K562 (cell line): ENCODE measurements at regions of chr2 and their contacts with region 1.

Region 1: DNA sequence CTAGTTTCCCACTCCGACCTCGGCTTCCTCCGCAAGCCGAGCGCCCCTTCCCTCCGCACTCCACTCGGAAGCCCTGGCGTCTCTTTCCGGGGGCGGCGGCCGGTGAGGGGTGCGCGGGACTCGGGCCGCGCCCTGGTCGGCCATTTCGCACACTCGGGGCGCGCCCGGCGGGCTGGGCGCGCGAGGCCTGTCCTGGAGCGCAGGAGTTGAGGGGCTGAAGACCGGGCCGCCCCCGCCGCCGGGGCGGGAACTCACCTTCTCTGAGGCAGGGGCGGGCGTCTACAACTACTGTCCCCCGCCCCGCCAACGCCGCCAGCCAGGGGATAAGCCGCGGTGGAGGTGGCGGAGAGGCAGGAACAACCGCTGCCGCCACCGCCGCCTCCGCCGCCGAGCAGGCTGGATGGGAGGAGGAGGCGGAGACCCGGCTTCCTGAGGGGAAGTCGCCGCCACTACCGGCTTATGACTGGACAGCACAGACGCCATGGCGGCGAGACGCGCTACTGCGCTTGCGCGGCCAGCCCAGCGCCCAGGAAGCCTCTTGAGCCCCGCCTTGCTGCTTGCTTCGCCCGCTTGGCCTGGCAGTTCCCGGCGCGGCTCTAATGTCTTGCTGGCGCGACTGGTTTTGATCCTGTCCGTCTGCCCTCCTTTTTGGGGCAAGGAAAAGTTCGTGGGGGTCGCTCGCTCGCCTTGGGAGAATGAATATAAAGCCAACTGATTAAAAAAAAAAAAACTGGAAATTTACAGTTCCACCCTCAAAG is at the start of gene KRCC1:
- DNase-seq: peak; percentile 94 to 97 (median 94)
- ATAC-seq: peak; percentile 90
- H3K4me3 ChIP-seq: peak within 1 kb of the TSS; percentile 79
- H3K27ac ChIP-seq: peak within 1 kb of the TSS; percentile 95
- H3K4me1 ChIP-seq: peaks cover 22 to 42% of the 10 kb centered on the region in 2 experiments
- H3K27me3 ChIP-seq: no peaks in the 10 kb centered on the region
- CTCF ChIP-seq: no peak
- EP300 ChIP-seq: peak; percentile 19; the same call in 1 of the 2 replicates
- POLR2A ChIP-seq: peak; percentile 96
- RAD21 ChIP-seq: 0 out of 4 replicates have a peak, but pooled peaks of 1 of the 2 experiments have one; percentile 5
- polyA plus RNA-seq, gene KRCC1: 2.1 TPM

Region 2: GRCh38 chr2:88016086-88016959 is 39.2 kb before region 1 on chr2 and contains the start of gene RNU2-63P:
- CTCF ChIA-PET with region 1: no interaction called
- POLR2A ChIA-PET with region 1: interaction called, 10 read pairs
- in situ Hi-C with region 1: no loop called
- intact Hi-C with region 1: loop called (anchors 1 kb)
- DNase-seq: peak; percentile 82 to 91 (median 86)
- ATAC-seq: peak; percentile 90
- H3K4me3 ChIP-seq: peak within 1 kb of the TSS; percentile 55
- H3K27ac ChIP-seq: peak within 1 kb of the TSS; percentile 100
- H3K4me1 ChIP-seq: peaks cover 11 to 14% of the 10 kb centered on the region in 2 experiments; a peak in 4 of 5 replicates
- H3K27me3 ChIP-seq: no peaks in the 10 kb centered on the region
- CTCF ChIP-seq: no peak
- EP300 ChIP-seq: peak; percentile 53
- POLR2A ChIP-seq: peak; percentile 100
- RAD21 ChIP-seq: peak in 1 of 2 experiments; percentile 15; a peak in 2 of 4 replicates
- polyA plus RNA-seq, gene RNU2-63P: 5.8 TPM in 1 of 2 experiments, not detected in the other

Region 3: DNA sequence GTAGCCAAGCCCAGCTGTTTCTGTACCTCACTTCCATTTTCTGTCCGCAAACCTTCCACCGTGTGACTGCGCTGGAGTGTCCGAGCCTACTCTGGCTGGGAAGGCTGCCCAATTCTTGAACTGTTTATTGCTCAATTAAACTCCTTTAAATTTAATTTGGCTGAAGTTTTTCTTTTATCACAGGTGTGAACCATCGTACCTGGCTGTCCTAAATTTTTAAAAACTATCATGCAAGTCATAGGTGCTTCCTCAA is 33.0 kb before region 1 on chr2:
- CTCF ChIA-PET with region 1: interaction called, 3 read pairs
- POLR2A ChIA-PET with region 1: interaction called, 3 read pairs
- in situ Hi-C with region 1: no loop called
- intact Hi-C with region 1: loop called (anchors 1 kb)
- DNase-seq: no peak
- ATAC-seq: no peak
- H3K4me3 ChIP-seq: no peak overlapping the region
- H3K27ac ChIP-seq: no peak overlapping the region
- H3K4me1 ChIP-seq: peaks cover 7 to 15% of the 10 kb centered on the region in 2 experiments; a peak in 4 of 5 replicates
- H3K27me3 ChIP-seq: no peaks in the 10 kb centered on the region
- CTCF ChIP-seq: no peak
- EP300 ChIP-seq: no peak
- POLR2A ChIP-seq: no peak
- RAD21 ChIP-seq: no peak

Region 4: DNA sequence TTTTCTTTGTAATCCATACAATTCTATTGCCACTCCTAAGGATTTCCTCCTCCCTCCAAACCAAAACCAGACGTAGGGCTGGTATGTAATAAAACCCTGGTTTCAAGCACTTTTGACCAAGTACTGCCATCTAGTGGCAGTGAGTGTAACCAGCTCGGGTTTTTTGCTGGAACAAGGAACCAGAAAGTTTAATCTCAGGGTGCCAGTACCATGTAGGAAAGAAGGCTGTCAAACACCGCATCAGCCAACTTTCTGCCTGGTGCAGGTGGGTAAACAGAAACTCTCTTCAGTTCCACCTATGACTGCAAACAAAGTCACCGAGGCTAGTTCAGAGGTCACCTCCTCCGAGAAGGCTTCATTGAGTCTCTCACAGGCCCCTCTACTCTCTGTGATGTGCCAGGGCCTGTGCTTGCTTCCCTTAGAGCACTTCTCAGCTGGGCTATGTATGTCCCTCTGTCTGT is 104.4 kb after region 1 on chr2:
- CTCF ChIA-PET with region 1: interaction called, 12 read pairs
- POLR2A ChIA-PET with region 1: no interaction called
- in situ Hi-C with region 1: loop called (anchors 5 kb)
- intact Hi-C with region 1: loop called (anchors 2 kb)
- DNase-seq: peak; percentile 60 to 82 (median 64)
- ATAC-seq: peak; percentile 82
- H3K4me3 ChIP-seq: no peak overlapping the region
- H3K27ac ChIP-seq: no peak overlapping the region
- H3K4me1 ChIP-seq: no peaks in the 10 kb centered on the region; a peak in 1 of 5 replicates
- H3K27me3 ChIP-seq: peaks cover 11 to 12% of the 10 kb centered on the region in 2 experiments; a peak in 3 of 5 replicates
- CTCF ChIP-seq: peak; percentile 78 to 92 (median 84)
- EP300 ChIP-seq: no peak
- POLR2A ChIP-seq: no peak
- RAD21 ChIP-seq: peak; percentile 95 to 96